ENCODE measurements at regions of chr3 and their contacts with region 1.

Region 1: DNA sequence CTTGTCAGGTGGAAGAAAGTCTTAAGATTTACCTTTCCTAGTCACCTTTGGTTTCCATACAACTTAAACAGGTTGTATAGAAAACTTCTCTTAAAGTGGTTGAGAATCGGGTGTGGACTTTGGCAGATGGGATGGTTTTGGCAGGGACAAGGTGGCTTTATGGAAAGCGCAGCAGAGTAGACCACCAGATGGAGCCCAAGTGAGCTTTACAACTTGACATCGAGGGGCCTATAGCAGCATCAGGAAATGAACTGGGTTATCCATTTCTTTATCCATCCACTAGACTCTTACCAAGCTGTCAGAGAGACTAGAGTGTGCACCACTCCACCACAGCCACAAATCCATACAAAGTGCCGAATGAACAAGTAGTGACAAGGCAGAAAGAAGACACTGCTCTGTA is 85.3 kb upstream of the MBNL1 start:
- DNase-seq: no peak
- ATAC-seq: peak; percentile 95
- H3K4me3 ChIP-seq: no peak overlapping the region
- H3K27ac ChIP-seq: no peak overlapping the region
- H3K4me1 ChIP-seq: no peaks in the 10 kb centered on the region
- H3K27me3 ChIP-seq: no peaks in the 10 kb centered on the region
- CTCF ChIP-seq: peak; percentile 63 to 67 (median 65)
- EP300 ChIP-seq: no peak
- POLR2A ChIP-seq: no peak
- RAD21 ChIP-seq: peak; percentile 70

Region 2: GRCh38 chr3:152193673-152194267 is 10.3 kb after region 1 on chr3:
- CTCF ChIA-PET with region 1: interaction called, 20 read pairs
- POLR2A ChIA-PET with region 1: interaction called, 3 read pairs
- RAD21 ChIA-PET with region 1: interaction called, 17 read pairs
- SMC1A ChIA-PET with region 1: interaction called, 21 read pairs
- in situ Hi-C with region 1: no loop called
- intact Hi-C with region 1: no loop called
- DNase-seq: no peak
- ATAC-seq: peak; percentile 67
- H3K4me3 ChIP-seq: peak overlapping the region; percentile 44; the same call in 1 of the 2 replicates
- H3K27ac ChIP-seq: peak overlapping the region; percentile 48; the same call in 1 of the 2 replicates
- H3K4me1 ChIP-seq: peaks cover 29% of the 10 kb centered on the region
- H3K27me3 ChIP-seq: no peaks in the 10 kb centered on the region
- CTCF ChIP-seq: no peak
- EP300 ChIP-seq: no peak
- POLR2A ChIP-seq: no peak
- RAD21 ChIP-seq: no peak; the same call in 1 of the 2 replicates

Region 3: GRCh38 chr3:152222327-152222726 is 38.9 kb after region 1 on chr3:
- CTCF ChIA-PET with region 1: interaction called, 11 read pairs
- POLR2A ChIA-PET with region 1: no interaction called
- RAD21 ChIA-PET with region 1: interaction called, 5 read pairs
- SMC1A ChIA-PET with region 1: interaction called, 5 read pairs
- in situ Hi-C with region 1: no loop called
- intact Hi-C with region 1: no loop called
- DNase-seq: no peak
- ATAC-seq: peak; percentile 38; the same call in 2 of the 3 replicates
- H3K4me3 ChIP-seq: no peak overlapping the region
- H3K27ac ChIP-seq: no peak overlapping the region
- H3K4me1 ChIP-seq: no peaks in the 10 kb centered on the region
- H3K27me3 ChIP-seq: no peaks in the 10 kb centered on the region
- CTCF ChIP-seq: no peak
- EP300 ChIP-seq: no peak
- POLR2A ChIP-seq: no peak
- RAD21 ChIP-seq: no peak

Region 4: DNA sequence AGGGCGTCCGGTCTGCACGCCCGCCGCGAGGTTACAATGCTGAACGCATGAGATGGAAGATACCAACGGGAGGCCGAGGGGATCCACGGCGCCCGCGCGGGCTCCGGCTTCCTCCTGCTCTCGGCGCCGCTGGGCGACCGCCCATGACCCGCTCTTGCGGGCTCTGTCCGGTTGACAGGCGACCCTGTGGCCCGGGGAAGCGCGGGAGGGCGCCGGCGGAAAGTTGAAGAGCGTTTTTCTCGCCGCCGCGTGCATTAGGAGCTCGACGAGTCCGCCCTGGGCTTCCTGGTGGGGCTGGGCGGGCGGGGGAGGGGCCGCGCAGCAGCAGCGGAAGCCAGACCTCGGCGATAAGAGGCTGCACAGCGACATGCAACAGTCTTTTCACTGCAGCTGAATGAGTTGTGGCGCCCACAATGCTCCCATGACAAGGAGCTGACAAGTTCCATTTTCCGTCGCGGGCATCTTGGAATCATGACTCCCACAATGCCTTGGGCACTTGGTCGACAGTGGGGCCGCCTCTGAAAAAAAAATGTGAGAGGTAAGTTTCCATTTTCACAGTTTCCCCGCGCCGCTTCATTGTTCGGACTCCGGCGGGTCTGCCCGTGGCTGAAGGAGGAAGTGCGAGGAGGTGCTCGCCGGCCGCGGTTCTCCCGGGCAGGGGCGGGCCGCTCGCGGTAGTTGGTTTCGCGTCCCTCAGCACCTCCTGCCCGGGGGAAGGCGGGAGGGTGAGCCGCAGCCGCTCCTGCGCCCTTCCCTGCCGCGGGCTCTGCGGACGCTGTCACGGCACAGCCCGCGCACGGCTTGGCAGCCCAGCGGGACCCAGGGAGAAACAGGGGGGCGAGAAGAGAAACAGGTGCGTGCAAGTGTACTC is 85.3 kb after region 1 on chr3 and contains the start of gene MBNL1:
- CTCF ChIA-PET with region 1: interaction called, 11 read pairs
- POLR2A ChIA-PET with region 1: interaction called, 5 read pairs
- RAD21 ChIA-PET with region 1: interaction called, 19 read pairs
- SMC1A ChIA-PET with region 1: interaction called, 83 read pairs
- in situ Hi-C with region 1: no loop called
- intact Hi-C with region 1: no loop called
- DNase-seq: no peak
- ATAC-seq: peak; percentile 67
- H3K4me3 ChIP-seq: peak within 1 kb of the TSS; percentile 95
- H3K27ac ChIP-seq: peak within 1 kb of the TSS; percentile 90
- H3K4me1 ChIP-seq: peaks cover 10% of the 10 kb centered on the region
- H3K27me3 ChIP-seq: no peaks in the 10 kb centered on the region
- CTCF ChIP-seq: no peak
- EP300 ChIP-seq: no peak
- POLR2A ChIP-seq: peak; percentile 96
- RAD21 ChIP-seq: no peak
- polyA plus RNA-seq, gene MBNL1: 59.6 to 73.3 TPM

Region 5: GRCh38 chr3:152309535-152310307 is 126.2 kb after region 1 on chr3:
- CTCF ChIA-PET with region 1: interaction called, 8 read pairs
- POLR2A ChIA-PET with region 1: no interaction called
- RAD21 ChIA-PET with region 1: no interaction called
- SMC1A ChIA-PET with region 1: interaction called, 11 read pairs
- in situ Hi-C with region 1: no loop called
- intact Hi-C with region 1: no loop called
- DNase-seq: no peak
- ATAC-seq: peak; percentile 49
- H3K4me3 ChIP-seq: no peak overlapping the region
- H3K27ac ChIP-seq: no peak overlapping the region
- H3K4me1 ChIP-seq: no peaks in the 10 kb centered on the region
- H3K27me3 ChIP-seq: no peaks in the 10 kb centered on the region
- CTCF ChIP-seq: no peak
- EP300 ChIP-seq: no peak
- POLR2A ChIP-seq: no peak
- RAD21 ChIP-seq: no peak

Region 6: DNA sequence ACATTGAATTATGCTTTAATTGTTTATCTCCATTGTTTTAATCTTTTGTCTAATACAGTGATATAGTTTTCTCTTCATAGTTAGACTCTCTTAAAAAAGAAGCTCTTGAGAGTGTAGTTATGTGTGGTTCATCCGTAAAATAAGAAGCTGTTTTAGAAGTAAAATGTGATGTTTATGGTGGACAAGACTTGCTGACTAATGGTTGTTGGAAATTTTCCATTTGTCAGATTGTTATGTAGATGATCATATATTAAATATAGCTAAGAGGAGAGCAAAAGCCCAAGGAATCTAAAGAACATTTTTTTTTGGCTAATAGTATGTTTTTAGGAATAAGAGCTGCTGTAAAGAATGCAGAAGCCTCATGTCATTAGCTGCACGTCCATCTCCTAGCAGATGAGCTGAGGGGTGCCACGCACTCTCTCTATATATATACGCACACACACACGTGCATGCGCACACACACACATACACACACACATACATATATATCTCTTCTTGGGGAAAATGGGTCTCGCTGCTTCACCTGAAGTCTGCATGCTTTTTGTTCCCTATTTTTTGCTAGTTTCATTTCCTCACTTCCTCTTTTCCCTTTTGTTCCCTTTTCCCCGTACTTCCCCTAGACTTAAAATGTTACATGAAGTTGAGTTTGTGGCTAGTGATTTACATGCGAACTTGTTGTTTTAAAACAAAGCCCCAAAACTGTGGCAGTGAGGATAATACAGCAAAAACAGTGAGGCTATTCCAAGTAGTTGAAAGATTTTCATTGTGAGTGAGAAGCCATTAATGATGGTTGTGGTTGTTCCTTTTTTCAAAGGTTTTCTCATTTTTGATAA is 193.1 kb after region 1 on chr3:
- CTCF ChIA-PET with region 1: interaction called, 9 read pairs
- POLR2A ChIA-PET with region 1: no interaction called
- RAD21 ChIA-PET with region 1: interaction called, 13 read pairs
- SMC1A ChIA-PET with region 1: interaction called, 12 read pairs
- in situ Hi-C with region 1: no loop called
- intact Hi-C with region 1: no loop called
- DNase-seq: peak; percentile 97
- ATAC-seq: peak; percentile 83
- H3K4me3 ChIP-seq: no peak overlapping the region; the same call in 1 of the 2 replicates
- H3K27ac ChIP-seq: peak overlapping the region; percentile 90
- H3K4me1 ChIP-seq: peaks cover 30% of the 10 kb centered on the region
- H3K27me3 ChIP-seq: no peaks in the 10 kb centered on the region
- CTCF ChIP-seq: no peak
- EP300 ChIP-seq: peak; percentile 95 to 99
- POLR2A ChIP-seq: peak; percentile 53
- RAD21 ChIP-seq: no peak

Region 7: GRCh38 chr3:152471814-152472671 is 288.6 kb after region 1 on chr3:
- CTCF ChIA-PET with region 1: interaction called, 26 read pairs
- POLR2A ChIA-PET with region 1: no interaction called
- RAD21 ChIA-PET with region 1: interaction called, 10 read pairs
- SMC1A ChIA-PET with region 1: interaction called, 23 read pairs
- in situ Hi-C with region 1: no loop called
- intact Hi-C with region 1: no loop called
- DNase-seq: peak; percentile 37
- ATAC-seq: peak; percentile 85
- H3K4me3 ChIP-seq: no peak overlapping the region; the same call in 1 of the 2 replicates
- H3K27ac ChIP-seq: no peak overlapping the region
- H3K4me1 ChIP-seq: no peaks in the 10 kb centered on the region
- H3K27me3 ChIP-seq: no peaks in the 10 kb centered on the region
- CTCF ChIP-seq: peak; percentile 61 to 65 (median 65)
- EP300 ChIP-seq: no peak
- POLR2A ChIP-seq: no peak
- RAD21 ChIP-seq: peak; percentile 65